CD4-positive, alpha-beta T cell (primary cell): ENCODE measurements at regions of chr17 and their contacts with region 1.

Region 1: DNA sequence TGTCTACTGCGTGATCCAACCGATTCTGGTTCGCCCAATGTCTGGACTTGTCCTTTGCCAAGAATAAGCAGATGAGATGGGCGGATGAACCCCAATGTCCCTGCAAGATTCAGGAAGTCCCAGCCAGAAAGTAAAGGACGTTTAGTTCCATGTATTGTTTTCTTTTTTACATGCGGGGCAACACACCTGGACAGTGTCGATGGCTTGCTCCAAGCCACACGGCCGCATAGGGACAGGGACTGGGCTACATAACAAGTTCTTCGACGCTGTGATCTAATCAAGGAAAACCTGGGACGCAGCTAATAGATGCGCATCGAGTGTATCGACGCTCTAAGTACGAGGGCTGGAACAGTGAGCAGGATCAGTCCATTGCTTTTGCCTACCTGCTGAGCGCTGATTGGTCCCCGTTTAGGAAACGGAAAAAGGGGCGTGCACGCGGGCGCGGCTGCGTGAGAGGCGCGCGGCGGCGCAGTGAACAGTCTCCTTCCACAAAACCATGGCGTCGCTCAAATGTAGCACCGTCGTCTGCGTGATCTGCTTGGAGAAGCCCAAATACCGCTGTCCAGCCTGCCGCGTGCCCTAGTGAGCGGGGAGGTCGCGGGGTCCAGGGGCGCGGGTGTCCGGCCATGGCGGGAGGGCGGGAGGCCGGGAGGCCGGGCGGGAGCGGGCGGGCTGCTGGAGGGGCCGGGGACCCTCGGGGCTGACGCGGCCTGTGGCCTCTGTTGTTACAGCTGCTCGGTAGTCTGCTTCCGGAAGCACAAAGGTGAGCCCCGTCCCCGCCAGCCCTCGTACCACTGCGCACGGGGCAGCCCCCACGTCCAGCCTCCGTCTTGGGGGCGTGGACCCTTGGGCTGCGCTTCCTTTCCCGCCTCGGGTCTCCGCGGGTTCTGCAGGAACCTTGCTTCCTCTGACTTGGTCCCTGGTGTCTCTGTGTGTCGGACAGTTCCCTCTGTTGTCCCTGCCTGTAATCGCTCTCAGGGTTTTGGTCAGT is at the start of gene ZNHIT3:
- DNase-seq: peak; percentile 81 to 96 (median 86)
- ATAC-seq: peak; percentile 95
- H3K4me3 ChIP-seq: peak within 1 kb of the TSS; percentile 99
- H3K4me3 Mint-ChIP-seq: peak within 1 kb of the TSS; percentile 99
- H3K27ac ChIP-seq: peak within 1 kb of the TSS; percentile 41 to 60
- H3K27ac Mint-ChIP-seq: peak within 1 kb of the TSS; percentile 88
- H3K4me1 ChIP-seq: peaks cover 52% of the 10 kb centered on the region
- H3K4me1 Mint-ChIP-seq: peaks cover 44% of the 10 kb centered on the region
- H3K27me3 ChIP-seq: peaks cover 8 to 10% of the 10 kb centered on the region in 2 experiments
- H3K27me3 Mint-ChIP-seq: peaks cover 10% of the 10 kb centered on the region
- CTCF ChIP-seq: no peak
- total RNA-seq, gene ZNHIT3: 70.2 to 73.9 TPM

Region 2: GRCh38 chr17:35947156-35947585 is 539.3 kb before region 1 on chr17:
- CTCF ChIA-PET with region 1: no interaction called
- POLR2A ChIA-PET with region 1: no interaction called
- intact Hi-C with region 1: loop called in 1 of 2 experiments (anchors 10 kb)
- DNase-seq: peak in 13 of 14 experiments; percentile 9 to 71 (median 26)
- ATAC-seq: peak; percentile 85
- H3K4me3 ChIP-seq: no peak overlapping the region
- H3K4me3 Mint-ChIP-seq: no peak overlapping the region
- H3K27ac ChIP-seq: no peak overlapping the region
- H3K27ac Mint-ChIP-seq: no peak overlapping the region
- H3K4me1 ChIP-seq: peaks cover 6% of the 10 kb centered on the region
- H3K4me1 Mint-ChIP-seq: no peaks in the 10 kb centered on the region
- H3K27me3 ChIP-seq: no peaks in the 10 kb centered on the region
- H3K27me3 Mint-ChIP-seq: no peaks in the 10 kb centered on the region
- CTCF ChIP-seq: peak; percentile 68

Region 3: DNA sequence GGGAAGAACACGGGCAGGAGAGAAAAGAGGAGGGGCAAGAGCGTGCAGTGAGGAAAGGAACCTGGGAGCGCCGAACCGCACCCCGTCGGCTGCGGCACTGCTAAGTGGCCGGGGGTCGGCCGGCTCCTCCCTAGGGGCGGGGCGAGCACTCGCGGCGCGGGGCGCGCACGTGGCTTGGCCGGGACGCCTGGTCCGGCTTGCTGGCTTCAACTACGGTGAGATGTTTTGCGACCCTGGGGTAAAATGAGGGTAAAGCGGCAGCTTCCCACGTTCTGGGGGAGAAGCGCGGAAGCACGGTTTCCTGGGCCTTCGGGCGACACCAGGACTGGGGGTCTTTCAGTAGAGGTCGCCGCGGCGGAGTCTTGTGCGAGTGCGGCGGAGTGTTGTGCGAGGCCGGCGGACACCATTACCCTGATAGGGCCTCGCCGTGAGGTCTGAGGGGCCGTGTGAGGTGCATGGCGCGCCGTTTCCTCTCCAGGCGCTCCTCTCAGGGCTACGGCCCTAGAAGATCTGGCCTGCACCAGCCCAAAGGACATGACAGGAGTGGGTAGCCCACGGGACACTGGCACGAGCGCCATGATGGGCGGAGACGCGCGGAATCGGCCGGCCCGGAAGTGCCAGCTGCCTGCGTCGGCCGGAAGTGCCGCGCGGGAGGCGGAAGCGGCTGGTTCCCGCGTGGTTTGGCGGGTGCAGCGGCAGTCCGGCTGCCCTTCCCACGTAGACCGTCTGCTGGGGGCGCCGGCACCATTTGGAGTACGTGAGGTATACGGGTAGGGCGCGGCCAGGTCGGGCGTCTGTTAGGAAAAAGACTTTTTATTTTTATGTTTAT is 48.6 kb after region 1 on chr17 and contains the starts of genes MYO19 and PIGW:
- CTCF ChIA-PET with region 1: interaction called, 4 read pairs
- POLR2A ChIA-PET with region 1: interaction called, 31 read pairs
- intact Hi-C with region 1: loop called (anchors 2 to 5 kb)
- DNase-seq: peak; percentile 70 to 94 (median 80)
- ATAC-seq: peak; percentile 73
- H3K4me3 ChIP-seq: peak within 1 kb of the TSS; percentile 95
- H3K4me3 Mint-ChIP-seq: peak within 1 kb of the TSS; percentile 93
- H3K27ac ChIP-seq: peak within 1 kb of the TSS; percentile 95 to 97
- H3K27ac Mint-ChIP-seq: peak within 1 kb of the TSS; percentile 95
- H3K4me1 ChIP-seq: peaks cover 19% of the 10 kb centered on the region
- H3K4me1 Mint-ChIP-seq: peaks cover 25% of the 10 kb centered on the region
- H3K27me3 ChIP-seq: no peaks in the 10 kb centered on the region
- H3K27me3 Mint-ChIP-seq: no peaks in the 10 kb centered on the region
- CTCF ChIP-seq: no peak
- total RNA-seq, gene MYO19: 64.4 to 70.5 TPM
- total RNA-seq, gene PIGW: 3.3 to 3.4 TPM

Region 4: DNA sequence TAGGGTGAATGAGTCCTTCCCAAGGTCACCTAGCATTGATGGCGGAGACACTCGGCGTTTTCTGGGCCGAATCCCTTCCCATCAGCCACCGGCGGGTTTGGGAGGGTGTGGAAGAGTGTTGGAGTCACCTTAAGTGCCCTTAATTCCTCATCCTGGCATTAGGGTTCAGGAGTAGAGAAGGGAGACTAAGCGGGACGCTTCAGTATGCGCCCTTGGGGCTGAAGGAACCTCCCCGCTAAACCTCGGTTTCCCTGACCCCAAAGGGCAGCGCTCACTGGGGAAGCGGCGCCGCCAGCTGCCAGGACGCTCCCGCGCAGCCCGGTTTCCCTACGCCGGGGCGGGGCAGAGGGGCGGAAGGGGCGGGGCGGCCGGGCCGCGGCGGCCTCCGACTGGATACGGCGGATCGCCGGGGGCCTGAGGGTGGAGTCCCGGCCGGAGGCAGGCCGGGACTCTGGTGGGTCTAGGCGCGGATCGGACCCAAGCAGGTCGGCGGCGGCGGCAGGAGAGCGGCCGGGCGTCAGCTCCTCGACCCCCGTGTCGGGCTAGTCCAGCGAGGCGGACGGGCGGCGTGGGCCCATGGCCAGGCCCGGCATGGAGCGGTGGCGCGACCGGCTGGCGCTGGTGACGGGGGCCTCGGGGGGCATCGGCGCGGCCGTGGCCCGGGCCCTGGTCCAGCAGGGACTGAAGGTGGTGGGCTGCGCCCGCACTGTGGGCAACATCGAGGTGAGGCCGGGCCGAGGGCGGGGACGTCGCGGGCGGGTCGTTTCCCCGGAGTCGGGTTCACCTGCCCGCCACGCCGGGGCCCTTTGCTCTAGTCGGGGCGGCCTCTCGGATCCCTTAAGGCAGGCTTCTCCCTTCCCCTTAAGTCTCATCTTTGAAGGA is 105.2 kb after region 1 on chr17 and contains the start of gene DHRS11:
- CTCF ChIA-PET with region 1: no interaction called
- POLR2A ChIA-PET with region 1: interaction called, 3 read pairs
- intact Hi-C with region 1: loop called in 1 of 2 experiments (anchors 5 kb)
- DNase-seq: peak; percentile 48 to 83 (median 72)
- ATAC-seq: peak; percentile 88
- H3K4me3 ChIP-seq: peak within 1 kb of the TSS; percentile 61
- H3K4me3 Mint-ChIP-seq: peak within 1 kb of the TSS; percentile 87
- H3K27ac ChIP-seq: peak within 1 kb of the TSS in 1 of 2 donors; percentile 30
- H3K27ac Mint-ChIP-seq: peak within 1 kb of the TSS; percentile 67
- H3K4me1 ChIP-seq: peaks cover 18% of the 10 kb centered on the region
- H3K4me1 Mint-ChIP-seq: peaks cover 28% of the 10 kb centered on the region
- H3K27me3 ChIP-seq: no peaks in the 10 kb centered on the region
- H3K27me3 Mint-ChIP-seq: no peaks in the 10 kb centered on the region
- CTCF ChIP-seq: no peak
- total RNA-seq, gene DHRS11: 2.9 to 4.0 TPM

Region 5: DNA sequence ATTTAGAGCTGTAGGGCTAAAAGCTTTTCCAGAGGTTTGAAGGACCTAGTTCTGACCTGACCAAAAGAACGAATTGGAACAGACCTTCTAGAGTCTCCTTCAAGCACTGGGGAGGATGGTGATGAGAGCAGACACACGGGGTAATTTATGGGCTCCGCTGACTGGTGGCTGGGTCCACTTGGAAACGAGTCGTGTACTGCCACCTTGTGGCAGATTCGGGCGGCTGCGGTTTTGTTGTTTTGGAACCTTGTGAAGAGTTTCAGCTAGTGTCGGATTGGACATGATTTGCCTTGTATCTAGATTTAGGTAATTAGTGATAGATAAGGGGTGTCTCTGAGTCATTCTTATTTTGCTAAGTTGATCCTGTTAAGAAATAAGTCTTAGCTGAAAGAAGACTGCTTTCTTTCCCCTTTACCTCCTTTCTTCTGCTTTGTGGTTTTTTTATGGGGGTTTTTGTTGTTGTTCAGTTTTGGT is 561.2 kb after region 1 on chr17:
- CTCF ChIA-PET with region 1: no interaction called
- POLR2A ChIA-PET with region 1: no interaction called
- intact Hi-C with region 1: loop called in 1 of 2 experiments (anchors 5 kb)
- DNase-seq: peak; percentile 63 to 85 (median 76)
- ATAC-seq: peak; percentile 89
- H3K4me3 ChIP-seq: no peak overlapping the region
- H3K4me3 Mint-ChIP-seq: no peak overlapping the region
- H3K27ac ChIP-seq: no peak overlapping the region
- H3K27ac Mint-ChIP-seq: peak overlapping the region; percentile 16
- H3K4me1 ChIP-seq: peaks cover 5% of the 10 kb centered on the region
- H3K4me1 Mint-ChIP-seq: peaks cover 13% of the 10 kb centered on the region
- H3K27me3 ChIP-seq: no peaks in the 10 kb centered on the region
- H3K27me3 Mint-ChIP-seq: no peaks in the 10 kb centered on the region
- CTCF ChIP-seq: peak; percentile 88